ENCODE measurements at regions of chr2 and their contacts with region 1.

Region 1: GRCh38 chr2:61854474-61855182 is 768 bp upstream of the FAM161A start:
- DNase-seq: peak; percentile 96 to 97
- H3K4me3 ChIP-seq: peak overlapping the region; percentile 96
- H3K4me3 Mint-ChIP-seq: peak overlapping the region; percentile 84
- H3K27ac Mint-ChIP-seq: peak overlapping the region; percentile 83
- H3K4me1 ChIP-seq: peaks cover 5% of the 10 kb centered on the region
- H3K4me1 Mint-ChIP-seq: no peaks in the 10 kb centered on the region
- H3K27me3 ChIP-seq: no peaks in the 10 kb centered on the region
- H3K27me3 Mint-ChIP-seq: no peaks in the 10 kb centered on the region
- CTCF ChIP-seq: no peak

Region 2: DNA sequence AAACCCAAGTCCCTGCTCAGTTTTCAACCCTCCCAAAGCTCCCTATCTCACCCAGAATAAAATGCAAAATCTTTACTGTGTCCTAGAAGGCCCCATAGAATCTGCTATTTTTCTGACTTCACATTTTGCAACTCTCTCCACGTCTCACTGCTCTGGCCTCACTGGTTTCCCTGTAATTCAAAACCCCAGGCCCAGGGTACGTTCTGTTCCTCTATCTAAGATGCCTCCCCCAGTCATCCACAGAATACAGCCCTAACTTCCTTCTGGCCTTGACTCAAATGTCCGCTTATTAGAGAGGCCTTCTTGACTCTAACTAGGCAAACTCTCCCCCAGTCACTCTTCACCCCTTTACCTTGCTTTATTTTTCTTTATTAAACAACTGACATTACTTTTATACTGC is 42.8 kb before region 1 on chr2:
- CTCF ChIA-PET with region 1: no interaction called
- POLR2A ChIA-PET with region 1: no interaction called
- intact Hi-C with region 1: loop called (anchors 2 kb)
- DNase-seq: no peak
- H3K4me3 ChIP-seq: no peak overlapping the region
- H3K4me3 Mint-ChIP-seq: no peak overlapping the region
- H3K27ac Mint-ChIP-seq: no peak overlapping the region
- H3K4me1 ChIP-seq: peaks cover 12% of the 10 kb centered on the region; the same call in 1 of the 2 replicates
- H3K4me1 Mint-ChIP-seq: peaks cover 11% of the 10 kb centered on the region
- H3K27me3 ChIP-seq: no peaks in the 10 kb centered on the region
- H3K27me3 Mint-ChIP-seq: no peaks in the 10 kb centered on the region
- CTCF ChIP-seq: no peak